ENCODE measurements at regions of chr15 and their contacts with region 1.

Region 1: GRCh38 chr15:57551717-57552677 is 39.7 kb upstream of the MYZAP start:
- DNase-seq: no peak
- H3K4me3 ChIP-seq: no peak overlapping the region
- H3K27ac ChIP-seq: no peak overlapping the region
- H3K4me1 ChIP-seq: no peaks in the 10 kb centered on the region
- H3K27me3 ChIP-seq: peaks cover 0 to 1% (median 0%) of the 10 kb centered on the region in 5 experiments

Region 2: DNA sequence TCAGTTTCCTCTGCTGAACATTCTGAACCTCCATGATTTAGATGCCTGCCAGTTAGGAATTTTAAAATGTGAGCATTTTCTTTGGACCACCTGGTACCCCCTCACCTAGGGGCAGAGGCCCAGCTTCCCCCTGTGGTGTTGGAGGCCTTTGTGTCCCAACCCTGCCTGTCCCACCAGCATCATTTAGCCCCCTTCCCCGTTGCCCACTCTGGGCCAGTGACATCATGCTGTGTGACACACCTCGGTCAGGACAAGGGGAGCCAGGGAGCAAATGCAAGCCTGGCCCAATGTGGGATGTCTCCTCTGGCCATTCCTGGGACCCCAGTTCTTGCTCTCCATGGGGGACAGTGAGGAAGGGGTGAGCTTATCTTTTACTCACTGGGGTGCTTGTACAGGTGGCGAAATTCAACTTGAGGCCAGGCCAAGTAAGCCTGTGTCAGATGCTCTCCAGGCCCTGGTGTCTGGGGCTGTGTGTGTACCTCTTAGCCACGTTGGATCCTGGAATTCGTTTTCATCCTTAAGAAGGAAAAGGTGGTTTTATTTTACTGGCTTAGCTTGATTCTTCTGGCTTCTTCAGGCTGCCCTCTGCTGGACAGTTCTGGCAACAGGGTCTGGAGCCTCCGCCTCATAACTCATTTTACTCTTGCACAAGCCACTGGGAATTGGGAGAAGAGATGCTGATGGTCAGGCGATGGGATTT is 10.0 kb before region 1 on chr15:
- CTCF ChIA-PET with region 1: interaction called, 18 read pairs
- POLR2A ChIA-PET with region 1: no interaction called
- DNase-seq: peak; percentile 40 to 62 (median 49)
- H3K4me3 ChIP-seq: no peak overlapping the region
- H3K27ac ChIP-seq: no peak overlapping the region
- H3K4me1 ChIP-seq: no peaks in the 10 kb centered on the region
- H3K27me3 ChIP-seq: peaks cover 0 to 7% (median 0%) of the 10 kb centered on the region in 5 experiments